MCF 10A (cell line): ENCODE measurements at regions of chr4 and their contacts with region 1.

Region 1: GRCh38 chr4:97720869-97721432 is 422.3 kb downstream of the STPG2 start:
- DNase-seq: peak; percentile 62
- H3K4me3 Mint-ChIP-seq: no peak overlapping the region
- H3K27ac Mint-ChIP-seq: peak overlapping the region; percentile 2
- H3K4me1 Mint-ChIP-seq: no peaks in the 10 kb centered on the region
- H3K27me3 Mint-ChIP-seq: no peaks in the 10 kb centered on the region
- CTCF ChIP-seq: peak; percentile 36

Region 2: GRCh38 chr4:96974295-96974694 is 746.7 kb before region 1 on chr4:
- CTCF ChIA-PET with region 1: no interaction called
- POLR2A ChIA-PET with region 1: no interaction called
- intact Hi-C with region 1: loop called (anchors 2 kb)
- DNase-seq: no peak
- H3K4me3 Mint-ChIP-seq: no peak overlapping the region
- H3K27ac Mint-ChIP-seq: no peak overlapping the region
- H3K4me1 Mint-ChIP-seq: no peaks in the 10 kb centered on the region
- H3K27me3 Mint-ChIP-seq: no peaks in the 10 kb centered on the region
- CTCF ChIP-seq: peak; percentile 9

Region 3: DNA sequence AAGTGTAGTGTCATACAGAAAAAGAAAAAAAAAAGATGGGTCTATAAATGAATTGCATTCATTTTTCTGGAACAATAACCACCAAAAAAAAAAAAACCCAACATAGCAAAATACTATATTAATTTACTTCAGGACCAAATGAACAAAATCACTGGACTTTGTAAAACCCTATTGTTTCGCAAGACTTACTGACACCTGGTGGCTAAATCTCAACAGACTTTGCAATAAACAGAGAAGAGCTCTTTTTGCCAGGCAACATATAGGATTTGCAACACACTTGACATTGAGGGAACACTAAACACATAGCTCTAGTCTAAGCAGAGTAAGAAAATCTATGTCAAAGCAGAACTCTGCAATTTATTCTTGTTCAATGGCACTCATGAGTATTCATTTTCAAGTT is 567.9 kb before region 1 on chr4:
- CTCF ChIA-PET with region 1: interaction called, 4 read pairs
- POLR2A ChIA-PET with region 1: no interaction called
- intact Hi-C with region 1: loop called (anchors 1 kb)
- DNase-seq: peak; percentile 42
- H3K4me3 Mint-ChIP-seq: no peak overlapping the region
- H3K27ac Mint-ChIP-seq: no peak overlapping the region
- H3K4me1 Mint-ChIP-seq: peaks cover 6% of the 10 kb centered on the region
- H3K27me3 Mint-ChIP-seq: no peaks in the 10 kb centered on the region
- CTCF ChIP-seq: peak; percentile 29

Region 4: GRCh38 chr4:97845758-97846157 is 124.8 kb after region 1 on chr4:
- CTCF ChIA-PET with region 1: no interaction called
- POLR2A ChIA-PET with region 1: no interaction called
- intact Hi-C with region 1: no loop called
- DNase-seq: no peak
- H3K4me3 Mint-ChIP-seq: no peak overlapping the region
- H3K27ac Mint-ChIP-seq: no peak overlapping the region
- H3K4me1 Mint-ChIP-seq: no peaks in the 10 kb centered on the region
- H3K27me3 Mint-ChIP-seq: no peaks in the 10 kb centered on the region
- CTCF ChIP-seq: no peak

Region 5: DNA sequence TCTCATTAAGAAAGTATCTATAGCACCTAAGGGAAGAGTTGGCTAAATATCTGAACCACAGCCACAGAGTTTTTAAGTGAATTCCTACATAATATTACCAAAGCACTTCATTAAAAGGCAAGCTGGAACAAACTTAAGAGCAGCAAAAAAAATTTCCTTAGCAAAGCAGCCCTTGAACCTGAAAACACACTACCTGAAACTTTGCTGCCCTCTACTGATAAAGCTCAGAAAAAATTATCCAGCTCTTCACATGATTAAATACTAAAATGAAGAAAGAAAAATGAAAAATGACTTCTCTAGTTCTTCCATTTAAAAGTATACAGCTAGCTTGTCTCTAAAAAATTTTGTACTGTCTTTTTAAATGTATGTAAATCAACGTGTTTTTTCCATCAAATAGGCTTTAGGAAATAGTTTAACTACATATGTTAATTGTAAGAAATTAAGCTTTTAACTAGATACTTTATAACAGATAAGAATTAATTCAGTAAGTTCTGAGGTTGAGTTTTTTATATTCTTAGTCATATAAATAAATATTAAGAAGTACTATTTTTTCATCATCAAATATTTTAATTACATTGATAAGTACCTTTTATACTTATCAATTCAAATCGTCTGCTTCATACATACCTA is 266.2 kb after region 1 on chr4:
- CTCF ChIA-PET with region 1: interaction called, 3 read pairs
- POLR2A ChIA-PET with region 1: no interaction called
- intact Hi-C with region 1: loop called (anchors 2 kb)
- DNase-seq: peak; percentile 49
- H3K4me3 Mint-ChIP-seq: no peak overlapping the region
- H3K27ac Mint-ChIP-seq: no peak overlapping the region
- H3K4me1 Mint-ChIP-seq: no peaks in the 10 kb centered on the region
- H3K27me3 Mint-ChIP-seq: no peaks in the 10 kb centered on the region
- CTCF ChIP-seq: peak; percentile 47